ENCODE measurements at regions of chr11 and their contacts with region 1.

Region 1: GRCh38 chr11:110195845-110196754 is 100.3 kb downstream of the RDX start:
- DNase-seq: peak; percentile 95
- H3K4me3 Mint-ChIP-seq: peak overlapping the region; percentile 47
- H3K27ac Mint-ChIP-seq: peak overlapping the region; percentile 99
- H3K4me1 Mint-ChIP-seq: peaks cover 58% of the 10 kb centered on the region
- H3K27me3 Mint-ChIP-seq: no peaks in the 10 kb centered on the region
- CTCF ChIP-seq: no peak

Region 2: GRCh38 chr11:109612496-109612895 is 583.6 kb before region 1 on chr11:
- CTCF ChIA-PET with region 1: no interaction called
- POLR2A ChIA-PET with region 1: no interaction called
- intact Hi-C with region 1: no loop called
- DNase-seq: no peak
- H3K4me3 Mint-ChIP-seq: no peak overlapping the region
- H3K27ac Mint-ChIP-seq: no peak overlapping the region
- H3K4me1 Mint-ChIP-seq: no peaks in the 10 kb centered on the region
- H3K27me3 Mint-ChIP-seq: no peaks in the 10 kb centered on the region
- CTCF ChIP-seq: no peak

Region 3: DNA sequence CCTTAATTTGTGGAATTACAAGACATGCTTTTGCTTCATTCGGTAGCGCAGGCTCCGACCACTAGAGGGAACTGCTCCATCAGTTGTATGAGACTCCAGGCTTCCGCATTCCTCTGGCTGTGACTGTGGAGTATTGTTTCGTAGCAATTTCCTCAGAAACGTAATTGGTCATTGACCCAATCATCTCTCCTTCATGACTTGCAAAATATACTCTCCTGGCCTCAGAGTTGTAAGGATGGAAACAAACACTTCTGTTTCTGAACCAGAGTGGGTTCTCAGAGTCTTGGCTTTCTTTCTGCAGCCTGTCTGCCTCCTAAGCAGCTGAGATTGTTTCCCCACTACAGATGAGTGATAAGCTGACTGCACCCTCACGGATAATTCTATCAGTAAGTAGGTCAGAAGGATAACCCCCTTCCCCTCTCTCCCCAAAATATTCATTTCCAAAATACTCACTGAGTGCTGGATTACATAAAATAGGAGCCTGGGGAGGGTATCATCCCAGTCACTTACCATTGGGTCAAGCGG is 249.7 kb before region 1 on chr11:
- CTCF ChIA-PET with region 1: interaction called, 6 read pairs
- POLR2A ChIA-PET with region 1: interaction called, 9 read pairs
- intact Hi-C with region 1: loop called (anchors 1 kb)
- DNase-seq: peak; percentile 93
- H3K4me3 Mint-ChIP-seq: peak overlapping the region; percentile 66
- H3K27ac Mint-ChIP-seq: peak overlapping the region; percentile 90
- H3K4me1 Mint-ChIP-seq: peaks cover 13% of the 10 kb centered on the region
- H3K27me3 Mint-ChIP-seq: no peaks in the 10 kb centered on the region
- CTCF ChIP-seq: peak; percentile 85

Region 4: GRCh38 chr11:110251837-110252236 is 55.7 kb after region 1 on chr11:
- CTCF ChIA-PET with region 1: interaction called, 42 read pairs
- POLR2A ChIA-PET with region 1: interaction called, 12 read pairs
- intact Hi-C with region 1: loop called (anchors 1 kb)
- DNase-seq: peak; percentile 97
- H3K4me3 Mint-ChIP-seq: peak overlapping the region; percentile 38
- H3K27ac Mint-ChIP-seq: peak overlapping the region; percentile 74
- H3K4me1 Mint-ChIP-seq: peaks cover 15% of the 10 kb centered on the region
- H3K27me3 Mint-ChIP-seq: no peaks in the 10 kb centered on the region
- CTCF ChIP-seq: no peak

Region 5: GRCh38 chr11:110305169-110306018 is 109.3 kb after region 1 on chr11:
- CTCF ChIA-PET with region 1: no interaction called
- POLR2A ChIA-PET with region 1: no interaction called
- intact Hi-C with region 1: no loop called
- DNase-seq: peak; percentile 20
- H3K4me3 Mint-ChIP-seq: no peak overlapping the region
- H3K27ac Mint-ChIP-seq: no peak overlapping the region
- H3K4me1 Mint-ChIP-seq: no peaks in the 10 kb centered on the region
- H3K27me3 Mint-ChIP-seq: no peaks in the 10 kb centered on the region
- CTCF ChIP-seq: no peak

Region 6: DNA sequence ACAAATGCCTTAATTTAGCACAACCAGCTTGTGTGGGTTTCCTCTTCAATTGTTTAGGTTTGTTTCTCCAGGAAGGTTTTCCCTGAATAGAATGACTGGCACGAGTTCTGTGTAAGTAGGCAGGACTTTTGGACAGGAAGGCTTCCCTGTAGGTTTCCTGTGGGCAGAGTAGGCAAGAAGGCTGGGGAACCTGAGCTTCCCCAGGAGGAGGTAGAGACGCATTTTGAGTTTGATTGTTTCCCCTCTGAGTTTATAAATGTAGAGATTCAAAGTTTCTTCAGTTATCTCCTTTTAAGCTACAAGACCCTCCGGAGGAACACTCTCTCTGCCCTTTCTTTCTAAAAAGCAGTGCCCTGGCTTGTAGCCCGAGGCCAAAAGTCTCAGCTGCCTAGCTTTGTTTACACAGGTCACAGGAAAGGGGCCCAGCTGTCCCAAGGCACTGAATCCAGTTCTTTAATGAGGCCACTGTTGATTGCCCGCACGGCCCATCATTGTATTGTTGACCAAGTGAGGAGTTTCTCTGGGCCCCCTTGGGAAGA is 166.9 kb after region 1 on chr11:
- CTCF ChIA-PET with region 1: interaction called, 74 read pairs
- POLR2A ChIA-PET with region 1: interaction called, 8 read pairs
- intact Hi-C with region 1: loop called (anchors 1 kb)
- DNase-seq: peak; percentile 32
- H3K4me3 Mint-ChIP-seq: no peak overlapping the region
- H3K27ac Mint-ChIP-seq: peak overlapping the region; percentile 89
- H3K4me1 Mint-ChIP-seq: peaks cover 16% of the 10 kb centered on the region
- H3K27me3 Mint-ChIP-seq: no peaks in the 10 kb centered on the region
- CTCF ChIP-seq: no peak

Region 7: DNA sequence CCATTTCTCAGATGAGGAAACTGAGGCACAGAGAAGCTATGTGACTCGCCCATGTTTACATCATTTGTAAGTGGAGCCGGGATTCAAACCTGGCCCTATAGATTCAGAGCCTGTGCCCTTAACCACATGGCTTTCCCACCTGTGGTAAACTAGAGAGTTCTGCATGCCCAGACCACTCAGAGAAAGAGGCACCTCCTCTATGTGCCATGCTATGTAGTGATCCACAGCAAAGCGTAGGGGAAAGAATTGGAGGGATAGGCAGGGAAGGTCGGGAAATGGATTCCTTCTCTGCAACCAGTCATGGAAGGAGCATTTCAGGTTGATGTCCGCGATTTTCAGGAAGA is 1034.0 kb after region 1 on chr11:
- CTCF ChIA-PET with region 1: no interaction called
- POLR2A ChIA-PET with region 1: interaction called, 3 read pairs
- intact Hi-C with region 1: loop called (anchors 1 kb)
- DNase-seq: no peak
- H3K4me3 Mint-ChIP-seq: peak overlapping the region; percentile 79
- H3K27ac Mint-ChIP-seq: peak overlapping the region; percentile 85
- H3K4me1 Mint-ChIP-seq: no peaks in the 10 kb centered on the region
- H3K27me3 Mint-ChIP-seq: peaks cover 40% of the 10 kb centered on the region
- CTCF ChIP-seq: no peak